ENCODE measurements at regions of chr6 and their contacts with region 1.

Region 1: DNA sequence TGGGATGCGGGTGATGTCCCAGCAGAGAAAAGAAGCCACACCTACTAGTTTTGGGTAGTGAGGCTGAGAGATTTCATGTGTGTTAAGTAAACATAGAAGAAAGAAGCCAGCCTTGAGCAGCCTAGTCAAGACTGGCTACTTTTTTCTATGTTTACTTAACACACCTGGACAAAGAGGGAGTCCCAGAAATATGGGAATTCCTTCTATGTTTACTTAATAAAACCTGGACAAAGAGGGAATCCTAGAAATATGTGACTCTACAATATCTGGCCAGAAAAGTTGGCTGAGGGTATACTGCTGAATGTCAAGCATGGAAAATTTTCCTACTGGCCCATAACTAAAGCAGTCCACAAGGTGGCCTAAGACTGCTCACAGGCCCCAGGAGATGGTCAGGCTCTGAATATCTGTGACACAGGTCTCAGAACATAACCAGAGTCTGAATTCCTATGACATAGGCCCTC is 578.3 kb upstream of the NRSN1 start:
- DNase-seq: peak; percentile 57
- ATAC-seq: peak; percentile 83
- H3K4me3 ChIP-seq: no peak overlapping the region
- H3K27ac ChIP-seq: no peak overlapping the region
- H3K4me1 ChIP-seq: peaks cover 6% of the 10 kb centered on the region; the same call in 1 of the 2 replicates
- H3K27me3 ChIP-seq: no peaks in the 10 kb centered on the region
- CTCF ChIP-seq: peak; percentile 59

Region 2: GRCh38 chr6:23637296-23637695 is 89.6 kb after region 1 on chr6:
- CTCF ChIA-PET with region 1: no interaction called
- POLR2A ChIA-PET with region 1: no interaction called
- intact Hi-C with region 1: loop called (anchors 2 kb)
- DNase-seq: peak; percentile 68
- ATAC-seq: peak; percentile 88
- H3K4me3 ChIP-seq: no peak overlapping the region
- H3K27ac ChIP-seq: no peak overlapping the region
- H3K4me1 ChIP-seq: peaks cover 6% of the 10 kb centered on the region; the same call in 1 of the 2 replicates
- H3K27me3 ChIP-seq: peaks cover 19% of the 10 kb centered on the region
- CTCF ChIP-seq: 0 out of 2 replicates have a peak, but pooled peaks have one; percentile 32

Region 3: GRCh38 chr6:23659125-23659524 is 111.4 kb after region 1 on chr6:
- CTCF ChIA-PET with region 1: no interaction called
- POLR2A ChIA-PET with region 1: no interaction called
- intact Hi-C with region 1: loop called (anchors 2 kb)
- DNase-seq: peak; percentile 64
- ATAC-seq: peak; percentile 90
- H3K4me3 ChIP-seq: no peak overlapping the region
- H3K27ac ChIP-seq: no peak overlapping the region
- H3K4me1 ChIP-seq: peaks cover 7% of the 10 kb centered on the region; the same call in 1 of the 2 replicates
- H3K27me3 ChIP-seq: no peaks in the 10 kb centered on the region
- CTCF ChIP-seq: peak; percentile 80

Region 4: DNA sequence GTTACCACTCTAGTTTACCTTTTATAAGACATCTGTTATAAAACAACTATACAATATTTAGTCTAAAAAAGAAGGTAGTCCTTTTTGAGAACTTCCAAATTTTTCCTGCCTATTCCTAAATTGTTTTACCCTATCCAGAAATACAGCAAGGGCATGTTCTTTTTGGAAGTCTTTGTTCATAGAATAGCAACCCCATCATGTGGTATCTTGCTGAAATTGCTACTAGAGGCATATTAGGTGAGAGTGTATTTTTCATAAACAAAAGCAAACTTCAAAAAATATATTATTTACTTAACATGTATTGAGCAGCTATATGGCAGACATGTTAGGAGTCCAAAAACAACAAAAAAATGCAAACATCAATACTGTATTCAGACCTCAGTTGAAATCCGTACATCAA is 206.5 kb after region 1 on chr6:
- CTCF ChIA-PET with region 1: no interaction called
- POLR2A ChIA-PET with region 1: no interaction called
- intact Hi-C with region 1: loop called (anchors 2 kb)
- DNase-seq: peak; percentile 19
- ATAC-seq: no peak
- H3K4me3 ChIP-seq: no peak overlapping the region
- H3K27ac ChIP-seq: no peak overlapping the region
- H3K4me1 ChIP-seq: no peaks in the 10 kb centered on the region
- H3K27me3 ChIP-seq: peaks cover 10% of the 10 kb centered on the region
- CTCF ChIP-seq: peak; percentile 59

Region 5: GRCh38 chr6:24056567-24056966 is 508.8 kb after region 1 on chr6:
- CTCF ChIA-PET with region 1: no interaction called
- POLR2A ChIA-PET with region 1: no interaction called
- intact Hi-C with region 1: loop called (anchors 5 kb)
- DNase-seq: no peak
- ATAC-seq: no peak
- H3K4me3 ChIP-seq: no peak overlapping the region
- H3K27ac ChIP-seq: no peak overlapping the region
- H3K4me1 ChIP-seq: no peaks in the 10 kb centered on the region
- H3K27me3 ChIP-seq: peaks cover 52% of the 10 kb centered on the region
- CTCF ChIP-seq: no peak